B cell (primary cell): ENCODE measurements at regions of chr11 and their contacts with region 1.

Region 1: DNA sequence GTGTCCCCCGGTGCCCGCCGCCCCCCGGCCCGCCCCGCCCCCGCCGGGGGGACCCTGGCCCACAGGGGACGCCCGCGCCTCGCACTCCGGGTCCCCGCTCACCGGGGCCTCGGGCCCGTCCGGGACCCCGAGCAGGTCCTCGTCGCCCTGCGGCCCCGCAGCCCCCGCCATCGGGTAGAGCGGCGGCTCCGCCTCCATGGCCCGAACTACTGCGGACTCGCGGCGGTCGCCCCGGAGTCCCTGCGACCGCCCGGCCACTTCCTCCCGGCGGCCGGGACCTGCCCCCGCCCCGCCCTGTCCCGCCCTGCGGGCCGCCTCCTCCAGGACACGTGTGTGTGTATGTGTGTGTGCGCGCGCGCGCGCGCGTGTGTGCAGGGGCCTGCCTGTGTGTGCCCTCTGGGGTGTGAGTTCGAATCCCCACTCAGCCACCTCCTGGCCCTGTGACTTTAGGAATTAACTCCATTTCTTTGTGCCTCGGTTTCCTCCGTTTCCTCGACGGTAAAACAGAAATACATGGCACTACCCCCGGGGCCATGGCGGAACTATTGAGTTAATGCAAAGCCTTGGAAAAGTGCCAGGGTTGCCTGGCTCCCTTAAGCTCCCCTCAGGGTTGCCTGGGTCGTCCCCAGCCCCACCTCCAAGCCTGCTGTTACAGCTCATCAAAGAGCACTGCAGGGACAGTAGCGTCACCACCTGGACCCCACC is at the start of gene UNC93B1:
- DNase-seq: peak; percentile 87
- ATAC-seq: peak; percentile 58
- H3K4me3 ChIP-seq: peak within 1 kb of the TSS; percentile 34 to 89 (median 67)
- H3K4me3 Mint-ChIP-seq: peak within 1 kb of the TSS; percentile 92
- H3K27ac ChIP-seq: peak within 1 kb of the TSS; percentile 74 to 76
- H3K27ac Mint-ChIP-seq: peak within 1 kb of the TSS; percentile 92
- H3K4me1 ChIP-seq: peaks cover 58 to 82% of the 10 kb centered on the region in 2 donors
- H3K4me1 Mint-ChIP-seq: peaks cover 55% of the 10 kb centered on the region
- H3K27me3 ChIP-seq: no peaks in the 10 kb centered on the region
- H3K27me3 Mint-ChIP-seq: no peaks in the 10 kb centered on the region
- CTCF ChIP-seq: no peak
- total RNA-seq, gene UNC93B1: 114 and 123 TPM in 2 replicates

Region 2: DNA sequence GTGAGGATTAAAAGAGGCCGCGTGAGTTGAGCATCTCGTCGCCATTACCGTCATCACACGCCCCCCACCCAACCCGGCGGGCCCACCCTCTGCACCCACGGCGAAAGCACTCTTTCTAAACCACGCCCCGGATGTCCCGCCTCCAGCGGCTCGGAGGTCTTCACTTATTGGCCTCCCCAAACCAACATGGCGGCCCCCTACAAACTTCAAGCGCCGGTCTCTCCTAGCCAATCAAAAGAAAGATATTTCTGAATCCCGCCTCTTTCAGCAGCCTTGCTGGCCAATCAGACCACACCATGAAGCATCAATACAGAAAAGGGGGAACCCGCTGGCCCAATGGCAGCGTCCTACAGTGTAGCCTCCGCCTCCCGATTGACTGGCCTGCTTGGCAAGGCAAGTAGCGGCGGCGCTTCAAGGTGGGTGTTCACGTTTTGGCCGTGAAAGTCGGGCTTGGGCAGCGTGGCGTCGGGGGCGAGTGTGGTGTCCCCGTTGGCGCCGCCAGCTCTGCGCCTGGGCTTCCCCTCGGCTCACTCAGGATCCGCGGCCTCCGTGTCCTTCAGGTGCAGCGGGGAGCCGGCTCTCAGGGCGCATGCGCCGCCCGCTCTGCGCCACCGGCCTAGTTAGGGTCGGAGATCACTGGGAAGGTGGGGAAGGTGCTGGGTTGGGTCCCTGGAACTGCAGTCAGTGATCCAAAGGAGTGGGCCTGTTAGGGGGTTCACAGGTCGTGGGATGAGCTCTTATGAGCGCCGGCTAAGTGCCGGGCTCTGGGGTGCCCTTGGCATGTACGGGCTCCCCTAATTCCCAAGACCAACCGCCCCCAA is 26.5 kb after region 1 on chr11 and contains the start of gene NDUFS8:
- CTCF ChIA-PET with region 1: interaction called, 3 read pairs
- POLR2A ChIA-PET with region 1: no interaction called
- intact Hi-C with region 1: loop called (anchors 1 kb)
- DNase-seq: peak; percentile 98
- ATAC-seq: peak; percentile 96
- H3K4me3 ChIP-seq: peak within 1 kb of the TSS; percentile 56 to 90 (median 81)
- H3K4me3 Mint-ChIP-seq: peak within 1 kb of the TSS; percentile 100
- H3K27ac ChIP-seq: peak within 1 kb of the TSS; percentile 57 to 78
- H3K27ac Mint-ChIP-seq: peak within 1 kb of the TSS; percentile 94
- H3K4me1 ChIP-seq: peaks cover 12 to 20% of the 10 kb centered on the region in 2 donors
- H3K4me1 Mint-ChIP-seq: peaks cover 21% of the 10 kb centered on the region
- H3K27me3 ChIP-seq: no peaks in the 10 kb centered on the region
- H3K27me3 Mint-ChIP-seq: no peaks in the 10 kb centered on the region
- CTCF ChIP-seq: no peak
- total RNA-seq, gene NDUFS8: 73.9 and 75.2 TPM in 2 replicates

Region 3: GRCh38 chr11:68038718-68039525 is 34.9 kb after region 1 on chr11 and contains the start of gene TCIRG1:
- CTCF ChIA-PET with region 1: interaction called, 8 read pairs
- POLR2A ChIA-PET with region 1: interaction called, 9 read pairs
- intact Hi-C with region 1: loop called (anchors 2 kb)
- DNase-seq: peak; percentile 62
- ATAC-seq: peak; percentile 45
- H3K4me3 ChIP-seq: peak within 1 kb of the TSS; percentile 61 to 86 (median 71)
- H3K4me3 Mint-ChIP-seq: peak within 1 kb of the TSS; percentile 89
- H3K27ac ChIP-seq: peak within 1 kb of the TSS; percentile 83 to 85
- H3K27ac Mint-ChIP-seq: peak within 1 kb of the TSS; percentile 96
- H3K4me1 ChIP-seq: peaks cover 24 to 51% of the 10 kb centered on the region in 2 donors
- H3K4me1 Mint-ChIP-seq: peaks cover 30% of the 10 kb centered on the region
- H3K27me3 ChIP-seq: no peaks in the 10 kb centered on the region
- H3K27me3 Mint-ChIP-seq: no peaks in the 10 kb centered on the region
- CTCF ChIP-seq: no peak
- total RNA-seq, gene TCIRG1: 305 and 306 TPM in 2 replicates

Region 4: GRCh38 chr11:68121067-68121899 is 117.3 kb after region 1 on chr11 and contains the start of gene CHKA:
- CTCF ChIA-PET with region 1: no interaction called
- POLR2A ChIA-PET with region 1: interaction called, 3 read pairs
- intact Hi-C with region 1: loop called (anchors 2 kb)
- DNase-seq: peak; percentile 94
- ATAC-seq: peak; percentile 93
- H3K4me3 ChIP-seq: peak within 1 kb of the TSS; percentile 65 to 78 (median 66)
- H3K4me3 Mint-ChIP-seq: peak within 1 kb of the TSS; percentile 95
- H3K27ac ChIP-seq: peak within 1 kb of the TSS; percentile 82 to 86
- H3K27ac Mint-ChIP-seq: peak within 1 kb of the TSS; percentile 95
- H3K4me1 ChIP-seq: peaks cover 21 to 29% of the 10 kb centered on the region in 2 donors
- H3K4me1 Mint-ChIP-seq: peaks cover 27% of the 10 kb centered on the region
- H3K27me3 ChIP-seq: no peaks in the 10 kb centered on the region
- H3K27me3 Mint-ChIP-seq: no peaks in the 10 kb centered on the region
- CTCF ChIP-seq: no peak
- total RNA-seq, gene CHKA: 20.6 and 24.9 TPM in 2 replicates

Region 5: GRCh38 chr11:68447015-68447801 is 443.2 kb after region 1 on chr11:
- CTCF ChIA-PET with region 1: no interaction called
- POLR2A ChIA-PET with region 1: no interaction called
- intact Hi-C with region 1: loop called (anchors 10 kb)
- DNase-seq: peak; percentile 84
- ATAC-seq: peak; percentile 99
- H3K4me3 ChIP-seq: no peak overlapping the region
- H3K4me3 Mint-ChIP-seq: no peak overlapping the region
- H3K27ac ChIP-seq: no peak overlapping the region
- H3K27ac Mint-ChIP-seq: no peak overlapping the region
- H3K4me1 ChIP-seq: peaks cover 5 to 13% of the 10 kb centered on the region in 2 donors
- H3K4me1 Mint-ChIP-seq: peaks cover 11% of the 10 kb centered on the region
- H3K27me3 ChIP-seq: no peaks in the 10 kb centered on the region
- H3K27me3 Mint-ChIP-seq: no peaks in the 10 kb centered on the region
- CTCF ChIP-seq: peak; percentile 93